Activated CD8-positive, alpha-beta T cell treated with anti-CD3 and anti-CD28 coated beads for 36 hours (primary cell): ENCODE measurements at regions of chr6 and their contacts with region 1.

Region 1: DNA sequence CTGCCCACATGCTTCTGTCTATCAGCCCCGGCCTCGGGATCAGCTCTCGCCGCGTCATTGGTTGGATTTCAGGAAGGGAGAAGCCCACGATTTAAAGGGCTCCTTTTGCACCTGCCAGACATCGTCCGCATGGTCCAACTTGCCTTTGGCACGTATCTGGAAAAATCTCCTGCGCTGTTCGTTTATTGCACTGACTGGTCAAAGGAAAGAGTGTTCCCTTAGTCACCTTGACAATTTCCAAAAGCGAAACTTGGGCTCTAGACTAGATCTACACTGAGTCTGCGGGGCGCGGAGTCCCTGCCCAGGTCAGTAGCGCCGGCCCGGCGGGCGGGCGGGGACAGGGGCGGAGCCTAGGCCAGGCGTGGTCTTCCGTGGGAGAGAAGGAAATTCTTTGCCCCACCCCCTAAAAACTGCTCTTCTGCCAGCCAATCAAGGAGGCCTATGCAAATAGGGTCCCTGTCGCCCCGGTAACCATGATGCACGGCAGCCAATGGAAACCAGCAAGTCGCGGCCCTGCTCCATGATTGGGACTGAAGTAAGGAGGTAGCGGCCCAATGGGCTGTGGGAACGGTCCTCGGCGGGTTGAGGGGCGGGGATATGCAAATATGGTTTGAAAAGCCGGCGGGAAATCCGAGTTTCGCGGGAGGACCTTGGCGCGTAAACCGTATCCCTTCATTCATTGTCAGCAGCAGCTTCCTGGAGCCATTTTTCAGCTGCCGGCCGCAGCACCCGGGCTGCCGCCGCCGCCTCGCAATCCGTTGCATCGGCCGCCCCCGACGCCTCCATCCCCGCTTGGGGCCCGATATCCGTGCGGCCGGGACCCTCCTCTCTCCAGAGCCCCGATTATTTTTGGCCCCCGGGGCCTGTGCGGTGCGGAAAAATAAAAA is at the start of gene E2F3:
- DNase-seq: peak; percentile 100
- ATAC-seq: peak; percentile 77
- H3K4me3 Mint-ChIP-seq: peak within 1 kb of the TSS; percentile 86
- H3K27ac Mint-ChIP-seq: peak within 1 kb of the TSS; percentile 99
- H3K4me1 Mint-ChIP-seq: peaks cover 24% of the 10 kb centered on the region
- H3K27me3 Mint-ChIP-seq: no peaks in the 10 kb centered on the region
- CTCF ChIP-seq: no peak
- total RNA-seq, gene E2F3: 16.0 to 17.0 TPM

Region 2: GRCh38 chr6:20291764-20292580 is 109.5 kb before region 1 on chr6:
- CTCF ChIA-PET with region 1: interaction called, 17 read pairs
- POLR2A ChIA-PET with region 1: interaction called, 3 read pairs
- intact Hi-C with region 1: loop called (anchors 5 kb)
- DNase-seq: peak; percentile 90
- ATAC-seq: peak; percentile 94
- H3K4me3 Mint-ChIP-seq: peak overlapping the region; percentile 42
- H3K27ac Mint-ChIP-seq: peak overlapping the region; percentile 26
- H3K4me1 Mint-ChIP-seq: peaks cover 15% of the 10 kb centered on the region
- H3K27me3 Mint-ChIP-seq: no peaks in the 10 kb centered on the region
- CTCF ChIP-seq: peak; percentile 94

Region 3: DNA sequence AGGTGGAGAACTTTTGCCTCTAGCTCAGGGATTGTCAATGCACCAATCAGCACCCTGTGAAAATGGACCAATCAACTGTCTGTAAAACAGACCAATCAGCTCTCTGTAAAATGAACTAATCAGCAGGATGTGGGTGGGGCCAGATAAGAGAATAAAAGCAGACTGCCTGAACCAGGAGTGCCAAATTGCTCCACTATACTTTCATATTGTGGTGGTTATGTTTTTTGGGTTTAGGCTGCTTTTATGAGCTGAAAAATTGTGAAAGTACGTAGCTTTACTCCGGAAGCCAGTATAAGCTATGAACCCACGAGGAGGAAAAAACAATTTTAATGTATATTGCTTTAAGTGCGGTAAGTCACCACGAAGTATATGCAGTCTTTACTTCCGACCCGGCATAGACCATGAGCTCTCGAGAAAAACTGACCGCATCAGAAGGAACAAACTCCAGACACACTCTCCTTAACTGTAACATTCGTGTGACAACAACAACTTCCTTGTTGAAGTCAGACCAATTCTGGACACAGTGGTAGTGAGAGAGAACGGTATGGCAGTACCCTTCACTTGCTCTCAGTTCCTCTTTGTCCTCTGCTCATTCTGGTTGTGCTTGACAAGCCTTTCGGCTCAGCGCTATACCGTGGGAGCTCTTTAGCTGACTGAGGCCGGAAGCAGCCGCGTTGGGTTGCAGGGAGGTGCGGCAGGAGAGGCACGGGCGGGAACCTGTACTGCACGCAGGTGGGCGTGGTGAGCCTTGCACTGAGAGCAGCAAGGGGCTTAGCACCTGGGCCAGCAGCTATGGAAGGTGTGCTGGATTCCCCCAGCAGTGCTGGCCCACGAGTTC is 81.7 kb before region 1 on chr6:
- CTCF ChIA-PET with region 1: interaction called, 17 read pairs
- POLR2A ChIA-PET with region 1: interaction called, 60 read pairs
- intact Hi-C with region 1: loop called (anchors 2 kb)
- DNase-seq: peak; percentile 89
- ATAC-seq: peak; percentile 95
- H3K4me3 Mint-ChIP-seq: peak overlapping the region; percentile 75
- H3K27ac Mint-ChIP-seq: peak overlapping the region; percentile 94
- H3K4me1 Mint-ChIP-seq: peaks cover 14% of the 10 kb centered on the region
- H3K27me3 Mint-ChIP-seq: no peaks in the 10 kb centered on the region
- CTCF ChIP-seq: no peak

Region 4: GRCh38 chr6:20334334-20334733 is 67.1 kb before region 1 on chr6:
- CTCF ChIA-PET with region 1: interaction called, 10 read pairs
- POLR2A ChIA-PET with region 1: interaction called, 7 read pairs
- intact Hi-C with region 1: no loop called
- DNase-seq: peak; percentile 16
- ATAC-seq: no peak
- H3K4me3 Mint-ChIP-seq: no peak overlapping the region
- H3K27ac Mint-ChIP-seq: no peak overlapping the region
- H3K4me1 Mint-ChIP-seq: peaks cover 24% of the 10 kb centered on the region
- H3K27me3 Mint-ChIP-seq: no peaks in the 10 kb centered on the region
- CTCF ChIP-seq: no peak

Region 5: DNA sequence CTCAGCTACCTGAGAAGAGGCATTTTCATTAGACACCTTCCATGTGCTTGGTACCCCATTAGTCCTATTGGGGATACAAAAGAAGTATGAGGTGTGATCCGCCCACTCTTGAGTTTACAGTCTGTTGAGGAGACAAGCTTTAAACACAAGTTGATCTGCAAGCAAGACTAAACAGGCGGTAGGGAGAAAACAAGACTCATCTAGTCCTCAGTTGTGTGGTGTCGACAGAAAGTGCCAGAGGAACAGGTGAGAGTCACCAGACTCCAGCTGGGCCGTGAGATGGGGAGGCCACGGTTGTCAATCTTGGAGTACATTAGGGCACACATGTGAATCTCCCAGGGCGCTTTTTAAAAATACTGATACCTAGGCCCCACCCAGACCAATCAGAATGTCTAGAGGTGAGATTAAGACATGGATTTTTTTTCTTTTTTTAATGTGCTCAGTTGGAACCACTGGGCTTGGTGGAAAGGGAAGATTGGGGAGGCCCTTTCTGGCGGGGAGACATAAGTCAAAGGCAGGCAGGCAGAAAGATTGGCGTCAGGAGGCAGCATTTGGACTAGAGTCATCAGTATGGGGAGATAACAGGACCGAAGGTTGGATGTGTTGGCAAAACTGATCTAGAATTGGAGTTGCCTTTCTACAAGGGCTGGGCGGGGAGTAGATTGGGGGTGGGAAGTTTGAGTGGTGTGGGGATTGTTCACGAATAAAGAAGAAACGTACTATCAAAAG is 10.7 kb after region 1 on chr6:
- CTCF ChIA-PET with region 1: interaction called, 16 read pairs
- POLR2A ChIA-PET with region 1: interaction called, 10 read pairs
- intact Hi-C with region 1: no loop called
- DNase-seq: no peak
- ATAC-seq: no peak
- H3K4me3 Mint-ChIP-seq: no peak overlapping the region
- H3K27ac Mint-ChIP-seq: peak overlapping the region; percentile 56
- H3K4me1 Mint-ChIP-seq: peaks cover 80% of the 10 kb centered on the region
- H3K27me3 Mint-ChIP-seq: no peaks in the 10 kb centered on the region
- CTCF ChIP-seq: no peak

Region 6: DNA sequence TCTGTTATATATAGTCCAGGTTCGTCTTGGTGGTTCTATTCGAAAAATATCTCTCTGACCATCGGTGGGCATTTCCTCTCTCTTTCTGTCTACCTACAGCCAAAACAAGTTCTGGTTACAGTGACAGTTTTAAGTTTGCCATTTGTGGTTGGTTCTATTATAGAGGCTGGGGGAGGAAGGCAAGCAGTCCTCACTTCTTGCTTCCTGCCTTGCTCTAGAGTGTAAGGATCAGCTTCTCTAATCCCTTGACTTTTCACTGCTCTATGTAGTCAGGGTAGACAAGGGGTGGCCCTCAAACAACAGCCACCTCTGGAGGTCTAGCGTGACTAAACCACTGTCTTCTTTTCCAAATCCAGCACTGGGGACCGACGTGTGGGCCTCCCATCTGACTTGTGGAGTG is 16.4 kb after region 1 on chr6:
- CTCF ChIA-PET with region 1: interaction called, 16 read pairs
- POLR2A ChIA-PET with region 1: interaction called, 10 read pairs
- intact Hi-C with region 1: no loop called
- DNase-seq: no peak
- ATAC-seq: no peak
- H3K4me3 Mint-ChIP-seq: no peak overlapping the region
- H3K27ac Mint-ChIP-seq: peak overlapping the region; percentile 60
- H3K4me1 Mint-ChIP-seq: peaks cover 55% of the 10 kb centered on the region
- H3K27me3 Mint-ChIP-seq: no peaks in the 10 kb centered on the region
- CTCF ChIP-seq: no peak

Region 7: GRCh38 chr6:20534295-20535262 is 133.1 kb after region 1 on chr6 and contains the start of gene CDKAL1:
- CTCF ChIA-PET with region 1: interaction called, 25 read pairs
- POLR2A ChIA-PET with region 1: interaction called, 11 read pairs
- intact Hi-C with region 1: loop called (anchors 2 kb)
- DNase-seq: peak; percentile 96
- ATAC-seq: peak; percentile 95
- H3K4me3 Mint-ChIP-seq: peak within 1 kb of the TSS; percentile 97
- H3K27ac Mint-ChIP-seq: peak within 1 kb of the TSS; percentile 98
- H3K4me1 Mint-ChIP-seq: peaks cover 37% of the 10 kb centered on the region
- H3K27me3 Mint-ChIP-seq: peaks cover 1% of the 10 kb centered on the region
- CTCF ChIP-seq: no peak
- total RNA-seq, gene CDKAL1: 21.6 to 23.6 TPM

Region 8: DNA sequence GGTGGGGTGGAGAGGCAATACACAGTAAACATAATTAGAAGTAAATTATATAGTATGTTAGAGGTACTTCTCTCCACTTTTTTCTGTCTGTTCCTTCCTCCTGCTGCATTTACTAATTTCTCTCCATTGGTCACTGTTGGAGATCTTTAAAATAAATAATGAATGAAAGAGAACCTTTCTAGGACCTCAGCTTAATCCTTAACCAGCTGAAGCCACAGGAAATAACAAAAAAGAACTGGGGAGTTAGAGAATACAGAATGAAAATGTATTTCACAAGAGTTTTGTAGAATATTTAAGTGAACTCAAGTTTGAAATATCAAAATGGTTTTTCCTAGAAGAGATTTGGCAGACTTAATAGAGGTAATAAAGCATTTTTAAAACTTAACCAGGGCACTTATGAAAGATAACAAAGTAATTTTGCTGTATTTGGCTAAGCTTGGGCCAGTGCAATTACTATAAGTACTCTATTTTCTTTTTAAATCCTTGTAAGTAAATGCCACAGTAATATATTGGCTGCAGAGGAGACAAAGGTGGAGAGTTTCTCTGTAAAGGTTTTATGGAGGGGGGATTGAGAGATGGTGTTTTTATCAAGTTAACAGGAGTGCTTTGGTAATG is 537.8 kb after region 1 on chr6:
- CTCF ChIA-PET with region 1: no interaction called
- POLR2A ChIA-PET with region 1: no interaction called
- intact Hi-C with region 1: no loop called
- DNase-seq: no peak
- ATAC-seq: no peak
- H3K4me3 Mint-ChIP-seq: no peak overlapping the region
- H3K27ac Mint-ChIP-seq: no peak overlapping the region
- H3K4me1 Mint-ChIP-seq: no peaks in the 10 kb centered on the region
- H3K27me3 Mint-ChIP-seq: no peaks in the 10 kb centered on the region
- CTCF ChIP-seq: no peak